Calu3 (cell line): ENCODE measurements at regions of chr6 and their contacts with region 1.

Region 1: DNA sequence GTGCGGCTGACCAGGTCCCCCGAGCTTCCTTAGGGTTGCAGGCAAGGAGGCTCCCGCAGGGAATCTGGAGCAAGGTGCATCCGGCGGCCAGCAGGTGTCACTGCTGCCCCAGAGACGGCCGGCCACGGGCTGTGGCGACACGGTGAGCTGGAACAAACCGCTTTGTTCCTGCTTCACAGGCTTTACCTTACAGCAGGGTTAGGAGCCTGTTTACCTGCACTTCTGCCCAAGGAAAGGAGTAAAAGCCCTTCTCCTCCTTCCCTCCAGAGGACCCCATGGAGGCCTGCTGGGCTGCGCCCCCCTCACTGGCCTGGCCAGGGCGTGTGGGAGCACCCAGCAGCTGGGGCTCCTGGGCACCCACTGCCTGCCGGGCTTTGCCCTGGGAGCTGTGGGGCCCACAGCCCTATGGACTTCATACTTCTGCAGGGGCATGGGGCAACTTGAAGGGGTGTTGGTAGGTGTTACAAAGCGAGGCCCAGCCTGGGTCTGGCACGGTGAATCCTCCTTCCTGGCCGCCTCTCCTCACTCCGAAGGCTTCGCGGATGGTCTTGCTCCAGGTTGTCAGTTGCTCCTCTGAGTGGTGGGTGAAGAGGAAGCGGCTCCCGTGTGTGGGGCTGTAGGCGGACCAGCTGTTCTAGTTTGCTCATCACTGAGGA is 88.4 kb downstream of the CDC5L start:
- DNase-seq: peak; percentile 97
- H3K4me3 Mint-ChIP-seq: no peak overlapping the region
- H3K27ac Mint-ChIP-seq: no peak overlapping the region
- H3K4me1 Mint-ChIP-seq: peaks cover 37% of the 10 kb centered on the region
- H3K27me3 Mint-ChIP-seq: no peaks in the 10 kb centered on the region
- CTCF ChIP-seq: peak; percentile 98

Region 2: GRCh38 chr6:44289726-44290260 is 186.1 kb before region 1 on chr6:
- CTCF ChIA-PET with region 1: no interaction called
- intact Hi-C with region 1: no loop called
- DNase-seq: no peak
- H3K4me3 Mint-ChIP-seq: no peak overlapping the region
- H3K27ac Mint-ChIP-seq: no peak overlapping the region
- H3K4me1 Mint-ChIP-seq: no peaks in the 10 kb centered on the region
- H3K27me3 Mint-ChIP-seq: peaks cover 96% of the 10 kb centered on the region
- CTCF ChIP-seq: no peak

Region 3: GRCh38 chr6:44489910-44490604 is 14.2 kb after region 1 on chr6:
- CTCF ChIA-PET with region 1: interaction called, 38 read pairs
- intact Hi-C with region 1: loop called (anchors 2 kb)
- DNase-seq: peak; percentile 62
- H3K4me3 Mint-ChIP-seq: peak overlapping the region; percentile 38
- H3K27ac Mint-ChIP-seq: peak overlapping the region; percentile 91
- H3K4me1 Mint-ChIP-seq: peaks cover 67% of the 10 kb centered on the region
- H3K27me3 Mint-ChIP-seq: peaks cover 13% of the 10 kb centered on the region
- CTCF ChIP-seq: no peak

Region 4: GRCh38 chr6:44527181-44527580 is 51.3 kb after region 1 on chr6:
- CTCF ChIA-PET with region 1: no interaction called
- intact Hi-C with region 1: no loop called
- DNase-seq: no peak
- H3K4me3 Mint-ChIP-seq: no peak overlapping the region
- H3K27ac Mint-ChIP-seq: no peak overlapping the region
- H3K4me1 Mint-ChIP-seq: no peaks in the 10 kb centered on the region
- H3K27me3 Mint-ChIP-seq: peaks cover 35% of the 10 kb centered on the region
- CTCF ChIP-seq: no peak

Region 5: DNA sequence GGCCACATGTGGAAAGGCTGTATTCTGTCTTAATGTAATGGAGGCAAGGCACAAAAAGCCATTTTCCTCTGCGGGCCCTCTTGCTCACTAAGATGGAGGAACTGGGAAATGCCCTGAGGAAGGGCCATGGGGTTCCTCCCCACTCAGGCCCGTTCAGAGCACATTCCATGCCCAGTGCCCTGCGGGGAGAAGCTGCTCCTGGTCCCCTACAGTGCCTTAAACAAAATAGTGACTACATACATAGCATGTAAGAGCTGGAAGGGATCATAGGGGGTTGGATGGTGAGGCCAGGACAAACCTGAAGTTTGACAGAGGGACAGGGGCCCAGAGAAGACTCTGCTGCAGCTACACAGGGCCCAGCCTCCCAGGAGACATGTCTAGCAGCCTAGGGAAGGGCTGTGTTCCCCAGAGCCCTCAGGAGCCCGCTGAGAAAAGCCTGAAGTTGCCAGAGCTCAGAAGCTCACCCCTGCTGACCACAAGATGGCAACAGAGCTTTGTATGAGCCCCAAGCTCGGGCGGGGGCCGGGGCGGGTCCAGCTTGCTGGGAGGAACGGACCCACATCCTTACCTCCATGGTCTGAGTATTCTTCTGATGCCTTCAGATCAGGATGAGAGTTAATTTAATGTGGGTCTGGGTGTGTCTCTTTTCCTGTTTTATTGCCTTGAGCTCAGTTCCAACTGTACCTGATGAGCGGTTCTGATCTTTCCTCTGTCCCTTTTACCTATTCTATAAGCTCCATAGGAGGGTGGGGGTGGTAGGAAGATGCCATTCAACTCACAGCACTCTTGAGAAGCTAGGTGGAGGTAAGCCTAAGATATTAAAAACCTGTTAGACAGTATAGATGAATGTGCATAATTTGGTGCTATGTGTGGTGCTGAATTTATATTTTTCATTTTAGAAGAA is 154.5 kb after region 1 on chr6:
- CTCF ChIA-PET with region 1: interaction called, 42 read pairs
- intact Hi-C with region 1: no loop called
- DNase-seq: peak; percentile 70
- H3K4me3 Mint-ChIP-seq: no peak overlapping the region
- H3K27ac Mint-ChIP-seq: no peak overlapping the region
- H3K4me1 Mint-ChIP-seq: no peaks in the 10 kb centered on the region
- H3K27me3 Mint-ChIP-seq: peaks cover 57% of the 10 kb centered on the region
- CTCF ChIP-seq: peak; percentile 80

Region 6: GRCh38 chr6:44655412-44656342 is 179.8 kb after region 1 on chr6:
- CTCF ChIA-PET with region 1: interaction called, 22 read pairs
- intact Hi-C with region 1: no loop called
- DNase-seq: peak; percentile 90
- H3K4me3 Mint-ChIP-seq: peak overlapping the region; percentile 2
- H3K27ac Mint-ChIP-seq: peak overlapping the region; percentile 20
- H3K4me1 Mint-ChIP-seq: peaks cover 21% of the 10 kb centered on the region
- H3K27me3 Mint-ChIP-seq: peaks cover 83% of the 10 kb centered on the region
- CTCF ChIP-seq: peak; percentile 98

Region 7: DNA sequence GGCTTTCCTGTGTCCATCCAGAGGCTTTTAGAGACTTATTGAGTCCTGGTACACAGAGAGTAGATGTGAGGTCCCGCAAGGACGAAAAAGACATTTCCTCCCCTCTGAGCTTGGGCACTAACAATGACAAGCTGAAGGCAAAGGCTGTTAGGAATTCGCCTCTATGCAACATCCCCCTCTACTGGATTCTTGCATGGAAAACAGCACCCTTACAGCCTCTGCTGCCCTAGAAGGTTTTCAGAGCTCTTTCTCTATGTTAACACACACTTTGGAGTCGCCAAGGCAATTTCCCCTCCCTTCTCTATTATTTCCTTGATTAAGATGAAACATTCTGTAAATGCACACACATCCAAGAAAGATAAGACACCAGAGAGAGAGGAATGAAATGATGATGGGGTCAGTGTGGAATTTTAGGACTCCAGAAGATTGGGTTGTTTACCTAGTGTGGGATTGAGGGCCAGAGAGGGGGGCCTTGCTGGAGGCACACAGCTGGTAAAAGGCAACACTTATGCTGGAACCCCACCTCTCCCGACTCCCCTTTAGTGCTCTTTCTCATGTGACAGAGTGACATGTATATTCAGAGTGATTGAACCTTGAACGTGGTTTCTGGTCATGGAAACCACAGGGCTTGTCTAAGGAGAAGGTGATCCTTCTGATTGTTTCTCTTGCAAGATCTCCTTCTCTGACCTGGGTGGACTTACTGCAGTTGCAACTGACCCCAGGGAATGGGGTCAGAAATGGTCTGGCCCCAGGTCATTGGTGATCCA is 1239.0 kb after region 1 on chr6:
- CTCF ChIA-PET with region 1: interaction called, 14 read pairs
- intact Hi-C with region 1: no loop called
- DNase-seq: peak; percentile 61
- H3K4me3 Mint-ChIP-seq: no peak overlapping the region
- H3K27ac Mint-ChIP-seq: no peak overlapping the region
- H3K4me1 Mint-ChIP-seq: peaks cover 23% of the 10 kb centered on the region
- H3K27me3 Mint-ChIP-seq: peaks cover 25% of the 10 kb centered on the region
- CTCF ChIP-seq: peak; percentile 54